ENCODE measurements at regions of chr14 and their contacts with region 1.

Region 1: GRCh38 chr14:105490572-105491366 is at the start of gene TEDC1:
- DNase-seq: peak; percentile 100
- H3K4me3 ChIP-seq: peak within 1 kb of the TSS; percentile 74
- H3K27me3 ChIP-seq: peaks cover 6% of the 10 kb centered on the region; the same call in 1 of the 2 replicates
- CTCF ChIP-seq: peak; percentile 54
- polyA plus RNA-seq, gene TEDC1: 3.3 and 6.4 TPM in 2 replicates

Region 2: DNA sequence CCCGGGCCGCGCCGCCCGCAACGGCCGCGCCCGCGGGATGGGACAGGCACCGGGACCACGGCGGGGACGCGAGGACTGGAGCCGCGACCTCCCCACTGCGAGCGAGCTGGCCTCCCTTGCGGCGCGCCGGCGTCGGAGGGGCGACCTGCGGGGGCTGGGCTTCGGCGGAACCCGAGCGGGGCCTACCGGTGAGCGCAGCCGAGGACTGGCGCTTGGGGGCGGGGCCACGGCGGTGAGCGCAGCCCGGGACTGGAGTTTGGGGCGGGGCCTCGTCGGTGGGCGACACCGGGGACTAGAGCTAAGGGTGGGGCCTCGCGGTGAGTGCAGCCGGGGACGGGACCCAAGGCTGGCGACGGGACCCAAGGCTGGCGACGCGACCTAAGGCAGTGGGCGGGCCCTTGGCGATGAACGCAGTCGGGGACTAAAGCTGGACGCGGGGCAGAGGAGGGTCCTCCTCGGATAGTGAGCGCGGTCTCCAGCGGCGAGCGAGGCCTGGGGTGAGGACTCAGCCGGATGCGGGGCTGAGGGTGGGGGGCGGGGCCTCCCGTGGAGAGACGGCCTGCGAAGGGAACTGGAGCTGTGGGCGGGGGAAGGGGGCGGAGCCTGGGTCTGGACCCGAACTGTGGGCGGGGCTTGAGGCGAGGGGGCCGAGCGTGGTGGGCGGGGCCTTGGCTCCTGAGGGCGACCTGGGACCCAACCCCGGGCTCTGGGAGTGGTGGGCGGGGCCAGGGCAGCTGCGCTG is 189.8 kb before region 1 on chr14 and contains the start of gene BRF1:
- CTCF ChIA-PET with region 1: no interaction called
- POLR2A ChIA-PET with region 1: no interaction called
- DNase-seq: no peak
- H3K4me3 ChIP-seq: peak within 1 kb of the TSS; percentile 60
- H3K27me3 ChIP-seq: no peaks in the 10 kb centered on the region
- CTCF ChIP-seq: no peak
- polyA plus RNA-seq, gene BRF1: 5.8 and 8.2 TPM in 2 replicates

Region 3: GRCh38 chr14:105363847-105364708 is 126.7 kb before region 1 on chr14:
- CTCF ChIA-PET with region 1: interaction called, 18 read pairs
- POLR2A ChIA-PET with region 1: no interaction called
- DNase-seq: peak; percentile 44
- H3K4me3 ChIP-seq: peak overlapping the region; percentile 31
- H3K27me3 ChIP-seq: no peaks in the 10 kb centered on the region
- CTCF ChIP-seq: no peak

Region 4: GRCh38 chr14:105473677-105474482 is 16.9 kb before region 1 on chr14:
- CTCF ChIA-PET with region 1: interaction called, 15 read pairs
- POLR2A ChIA-PET with region 1: no interaction called
- DNase-seq: no peak
- H3K4me3 ChIP-seq: peak overlapping the region; percentile 47
- H3K27me3 ChIP-seq: no peaks in the 10 kb centered on the region
- CTCF ChIP-seq: no peak